ENCODE measurements at regions of chr1 and their contacts with region 1.

Region 1: GRCh38 chr1:222643938-222644635 is 26.2 kb downstream of the MIA3 start:
- DNase-seq: peak; percentile 100
- H3K4me3 Mint-ChIP-seq: peak overlapping the region; percentile 85
- H3K27ac Mint-ChIP-seq: peak overlapping the region; percentile 97
- H3K4me1 Mint-ChIP-seq: peaks cover 10% of the 10 kb centered on the region
- H3K27me3 Mint-ChIP-seq: no peaks in the 10 kb centered on the region
- CTCF ChIP-seq: no peak

Region 2: DNA sequence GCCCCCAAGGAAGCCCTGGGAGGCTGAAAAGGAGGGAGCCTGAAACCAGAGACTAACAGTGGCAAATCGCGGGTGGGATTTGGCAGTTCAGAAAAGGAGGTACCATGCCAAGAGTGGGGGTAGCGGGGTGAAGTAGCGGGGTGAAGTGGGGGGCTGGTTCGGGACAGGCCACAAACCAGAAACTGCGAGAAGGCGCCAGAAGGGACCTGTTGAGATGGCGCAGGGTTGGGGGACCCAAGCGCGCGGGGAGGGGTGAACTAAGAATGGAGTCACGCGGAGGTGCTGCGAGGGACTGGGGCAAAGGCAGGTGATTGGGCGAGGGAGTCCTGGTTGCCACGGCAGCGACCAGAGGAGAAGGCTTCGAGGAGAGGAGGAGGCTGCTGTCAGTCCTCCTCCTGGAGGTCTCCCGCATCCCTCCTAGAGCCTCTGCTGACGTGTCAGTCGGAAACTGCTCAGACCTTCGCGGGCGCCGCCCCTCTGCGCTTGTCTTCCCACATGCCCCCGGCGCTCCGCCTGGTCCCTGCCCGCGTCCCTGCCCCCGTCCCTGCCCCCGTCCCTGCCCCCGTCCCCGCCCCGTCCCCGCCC is 26.6 kb before region 1 on chr1:
- CTCF ChIA-PET with region 1: interaction called, 10 read pairs
- POLR2A ChIA-PET with region 1: interaction called, 50 read pairs
- intact Hi-C with region 1: loop called (anchors 1 kb)
- DNase-seq: peak; percentile 96
- H3K4me3 Mint-ChIP-seq: peak overlapping the region; percentile 79
- H3K27ac Mint-ChIP-seq: peak overlapping the region; percentile 46
- H3K4me1 Mint-ChIP-seq: peaks cover 27% of the 10 kb centered on the region
- H3K27me3 Mint-ChIP-seq: peaks cover 26% of the 10 kb centered on the region
- CTCF ChIP-seq: no peak

Region 3: GRCh38 chr1:222654849-222655248 is 10.8 kb after region 1 on chr1:
- CTCF ChIA-PET with region 1: interaction called, 6 read pairs
- POLR2A ChIA-PET with region 1: interaction called, 22 read pairs
- intact Hi-C with region 1: no loop called
- DNase-seq: no peak
- H3K4me3 Mint-ChIP-seq: no peak overlapping the region
- H3K27ac Mint-ChIP-seq: peak overlapping the region; percentile 1
- H3K4me1 Mint-ChIP-seq: no peaks in the 10 kb centered on the region
- H3K27me3 Mint-ChIP-seq: no peaks in the 10 kb centered on the region
- CTCF ChIP-seq: no peak

Region 4: DNA sequence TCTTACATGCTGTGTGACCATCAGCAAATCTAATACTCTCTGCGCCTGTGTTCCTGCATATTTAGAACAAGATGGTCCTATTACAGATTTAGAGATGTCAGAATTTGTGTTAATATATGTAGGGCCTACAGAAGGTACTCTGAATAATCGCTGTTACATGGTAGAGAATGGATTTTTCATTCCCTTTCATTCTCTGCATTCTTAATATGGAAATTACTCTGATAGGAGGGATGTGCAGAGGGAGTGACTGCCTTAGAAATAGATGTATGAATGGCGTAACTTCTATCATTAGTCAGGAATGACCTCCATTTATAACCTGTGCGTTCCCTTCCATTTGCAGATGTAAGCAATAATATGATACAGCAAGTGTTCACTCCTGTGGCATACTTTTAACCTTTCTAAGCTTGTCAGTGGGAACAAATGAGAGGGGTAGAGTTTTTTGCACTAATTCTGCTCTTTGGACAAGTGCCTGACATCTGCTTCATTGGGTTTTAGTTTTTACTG is 19.4 kb after region 1 on chr1:
- CTCF ChIA-PET with region 1: interaction called, 4 read pairs
- POLR2A ChIA-PET with region 1: interaction called, 22 read pairs
- intact Hi-C with region 1: no loop called
- DNase-seq: no peak
- H3K4me3 Mint-ChIP-seq: no peak overlapping the region
- H3K27ac Mint-ChIP-seq: no peak overlapping the region
- H3K4me1 Mint-ChIP-seq: no peaks in the 10 kb centered on the region
- H3K27me3 Mint-ChIP-seq: no peaks in the 10 kb centered on the region
- CTCF ChIP-seq: no peak

Measured in MCF 10A (cell line).